ENCODE measurements at regions of chr5 and their contacts with region 1.

Region 1: DNA sequence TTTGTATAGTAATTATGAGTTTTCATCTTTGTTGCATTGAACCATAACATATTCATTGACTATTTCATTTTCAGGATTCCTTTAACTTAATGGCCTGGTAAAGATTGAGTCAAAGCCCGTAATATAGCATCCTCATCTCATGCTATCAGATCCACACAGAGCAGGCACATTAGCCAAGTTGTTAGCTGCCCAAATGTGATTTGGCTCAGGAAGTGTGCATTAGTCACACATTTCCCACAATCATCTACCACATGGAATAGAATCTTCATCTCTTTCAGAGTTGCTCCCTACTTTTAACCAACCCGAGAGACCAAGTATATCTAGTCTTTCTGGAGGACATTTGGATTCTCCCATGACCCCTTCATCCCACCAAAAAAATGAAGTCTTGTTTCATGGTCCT is 481.0 kb upstream of the PTGER4 start:
- DNase-seq: peak; percentile 87
- H3K4me3 ChIP-seq: no peak overlapping the region
- H3K27ac ChIP-seq: peak overlapping the region; percentile 33
- H3K4me1 ChIP-seq: peaks cover 33% of the 10 kb centered on the region
- H3K27me3 ChIP-seq: no peaks in the 10 kb centered on the region
- CTCF ChIP-seq: no peak
- POLR2A ChIP-seq: no peak

Region 2: DNA sequence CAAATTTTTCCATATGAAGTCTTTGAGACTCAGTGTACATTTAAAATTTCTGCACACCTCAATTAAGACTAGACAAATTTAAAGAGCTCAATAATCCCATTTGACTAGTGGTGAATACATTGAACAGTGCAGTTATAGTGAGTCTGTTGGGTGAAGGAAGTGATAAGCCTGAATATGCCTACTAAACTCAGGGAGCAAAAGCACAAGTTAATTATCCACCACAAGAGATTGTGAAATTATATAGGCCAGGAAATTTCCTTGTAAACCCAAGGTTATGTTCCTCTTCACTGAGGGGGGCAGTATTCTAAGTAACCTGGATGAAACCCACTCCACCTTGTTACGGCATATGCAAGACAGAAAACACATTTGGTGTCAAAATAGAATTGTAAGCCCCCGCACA is 161.0 kb before region 1 on chr5:
- CTCF ChIA-PET with region 1: no interaction called
- POLR2A ChIA-PET with region 1: no interaction called
- dilution Hi-C with region 1: no loop called
- intact Hi-C with region 1: loop called (anchors 5 kb)
- DNase-seq: no peak
- H3K4me3 ChIP-seq: no peak overlapping the region
- H3K27ac ChIP-seq: no peak overlapping the region
- H3K4me1 ChIP-seq: peaks cover 11% of the 10 kb centered on the region
- H3K27me3 ChIP-seq: no peaks in the 10 kb centered on the region
- CTCF ChIP-seq: no peak
- POLR2A ChIP-seq: no peak

Region 3: GRCh38 chr5:40171971-40172370 is 26.8 kb before region 1 on chr5:
- CTCF ChIA-PET with region 1: interaction called, 5 read pairs
- POLR2A ChIA-PET with region 1: no interaction called
- dilution Hi-C with region 1: no loop called
- intact Hi-C with region 1: loop called (anchors 2 kb)
- DNase-seq: peak; percentile 82
- H3K4me3 ChIP-seq: no peak overlapping the region
- H3K27ac ChIP-seq: no peak overlapping the region
- H3K4me1 ChIP-seq: peaks cover 17% of the 10 kb centered on the region
- H3K27me3 ChIP-seq: no peaks in the 10 kb centered on the region
- CTCF ChIP-seq: no peak
- POLR2A ChIP-seq: no peak

Region 4: DNA sequence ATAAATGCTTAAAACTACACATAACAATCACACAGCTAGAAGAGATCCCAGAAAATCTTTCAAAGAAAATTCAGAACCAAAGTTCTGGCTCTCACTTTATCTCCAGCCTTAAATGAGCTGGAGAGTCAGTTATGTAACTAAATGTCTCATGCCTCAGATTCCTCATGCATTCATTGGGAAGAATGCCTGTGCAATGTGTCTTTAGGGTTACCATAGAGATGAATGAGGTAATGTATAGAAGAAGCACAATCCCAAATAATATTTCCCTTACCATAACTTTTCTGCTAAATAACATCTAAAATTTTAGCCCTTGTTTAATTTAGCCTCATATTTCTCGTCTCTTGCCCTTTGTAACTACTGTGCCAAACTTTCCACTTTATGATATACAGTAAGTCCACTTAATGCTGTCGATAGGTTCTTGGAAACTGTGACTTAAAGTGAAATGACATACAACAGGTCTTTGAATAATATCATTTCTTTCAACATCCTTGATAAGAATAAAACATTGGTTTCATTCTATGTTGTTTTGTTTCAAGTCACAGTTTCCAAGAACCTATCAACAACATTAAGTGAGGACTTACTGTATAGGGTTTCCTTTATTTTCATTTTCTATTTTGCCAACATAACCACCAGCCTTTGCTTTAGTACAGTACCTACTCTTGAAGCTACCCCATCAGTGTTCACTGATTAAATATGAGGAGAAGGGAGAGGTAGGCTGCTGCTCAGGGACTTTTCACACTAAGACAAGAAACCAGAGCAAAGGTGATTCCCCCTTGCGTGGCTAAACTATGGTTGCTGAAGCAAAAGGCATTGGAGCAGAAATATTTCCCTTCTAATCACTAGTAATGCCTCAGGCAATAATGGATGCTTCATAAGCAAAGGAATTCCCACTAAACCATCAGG is 185.3 kb after region 1 on chr5:
- CTCF ChIA-PET with region 1: no interaction called
- POLR2A ChIA-PET with region 1: no interaction called
- dilution Hi-C with region 1: no loop called
- intact Hi-C with region 1: no loop called
- DNase-seq: peak; percentile 15
- H3K4me3 ChIP-seq: no peak overlapping the region
- H3K27ac ChIP-seq: no peak overlapping the region
- H3K4me1 ChIP-seq: peaks cover 11% of the 10 kb centered on the region
- H3K27me3 ChIP-seq: no peaks in the 10 kb centered on the region
- CTCF ChIP-seq: no peak
- POLR2A ChIP-seq: no peak

Measured in endothelial cell of umbilical vein (primary cell).